OCI-LY7 (cell line): ENCODE measurements at regions of chr7 and their contacts with region 1.

Region 1: DNA sequence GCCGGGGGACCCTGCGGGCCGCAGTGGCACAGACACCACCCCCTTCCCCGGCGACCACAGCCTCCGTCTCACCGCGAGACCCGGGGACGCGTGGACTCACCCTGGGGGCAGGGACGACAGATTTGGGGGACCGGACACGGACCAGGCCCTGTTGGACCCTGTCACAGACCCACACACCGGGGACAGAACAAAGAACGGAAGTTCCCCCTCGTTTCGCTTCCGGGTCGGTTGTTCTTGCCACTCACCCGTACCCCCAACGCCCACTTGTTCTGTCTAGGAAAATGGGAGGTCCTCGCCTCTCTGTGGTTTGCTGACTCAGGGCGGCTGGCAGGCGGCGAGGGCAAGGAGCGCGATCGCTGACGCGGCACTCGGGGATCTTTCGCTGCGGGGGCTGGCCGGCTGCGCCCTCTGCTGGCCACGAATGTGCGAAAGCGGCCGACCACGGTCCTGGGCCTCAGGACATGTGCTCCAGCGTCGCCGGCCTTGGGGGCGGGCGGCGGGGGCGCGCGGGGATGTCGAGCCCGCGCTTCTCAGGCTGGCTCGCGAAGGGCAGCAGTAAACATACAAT is at the start of gene ZNF3:
- DNase-seq: peak; percentile 97
- H3K4me3 ChIP-seq: peak within 1 kb of the TSS; percentile 73
- H3K27ac ChIP-seq: peak within 1 kb of the TSS; percentile 64
- H3K4me1 ChIP-seq: peaks cover 22% of the 10 kb centered on the region
- CTCF ChIP-seq: peak; percentile 96
- total RNA-seq, gene ZNF3: 19.8 and 21.8 TPM in 2 replicates

Region 2: GRCh38 chr7:99685129-99685876 is 396.3 kb before region 1 on chr7:
- CTCF ChIA-PET with region 1: no interaction called
- POLR2A ChIA-PET with region 1: no interaction called
- intact Hi-C with region 1: no loop called
- DNase-seq: no peak
- H3K4me3 ChIP-seq: no peak overlapping the region
- H3K27ac ChIP-seq: no peak overlapping the region
- H3K4me1 ChIP-seq: no peaks in the 10 kb centered on the region
- CTCF ChIP-seq: no peak

Region 3: DNA sequence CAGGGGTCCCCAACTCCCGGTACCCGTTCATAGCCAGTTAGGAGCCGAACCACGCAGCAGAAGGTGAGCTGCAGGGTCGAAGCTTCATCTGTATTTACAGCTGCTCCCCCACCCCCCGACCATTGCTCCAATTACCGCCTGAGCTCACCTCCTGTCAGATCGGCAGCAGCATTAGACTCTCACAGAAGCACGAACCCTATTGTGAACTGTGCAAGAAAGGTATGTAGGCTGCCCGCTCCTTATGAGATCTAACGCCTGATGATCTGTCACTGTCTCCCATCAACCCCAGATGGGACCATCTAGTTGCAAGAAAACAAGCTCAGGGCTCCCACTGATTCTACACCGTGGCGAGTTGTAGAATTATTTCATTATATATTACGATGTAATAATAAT is 91.2 kb before region 1 on chr7:
- CTCF ChIA-PET with region 1: no interaction called
- POLR2A ChIA-PET with region 1: no interaction called
- intact Hi-C with region 1: loop called (anchors 2 kb)
- DNase-seq: no peak
- H3K4me3 ChIP-seq: no peak overlapping the region
- H3K27ac ChIP-seq: no peak overlapping the region
- H3K4me1 ChIP-seq: no peaks in the 10 kb centered on the region
- CTCF ChIP-seq: no peak

Region 4: GRCh38 chr7:100126931-100127865 is 45.6 kb after region 1 on chr7 and contains the start of gene MBLAC1:
- CTCF ChIA-PET with region 1: interaction called, 3 read pairs
- POLR2A ChIA-PET with region 1: interaction called, 5 read pairs
- intact Hi-C with region 1: loop called (anchors 5 kb)
- DNase-seq: peak; percentile 95
- H3K4me3 ChIP-seq: peak within 1 kb of the TSS; percentile 73
- H3K27ac ChIP-seq: peak within 1 kb of the TSS; percentile 94
- H3K4me1 ChIP-seq: peaks cover 48% of the 10 kb centered on the region
- CTCF ChIP-seq: no peak
- total RNA-seq, gene MBLAC1: 4.4 and 4.8 TPM in 2 replicates

Region 5: GRCh38 chr7:100171087-100171681 is 89.6 kb after region 1 on chr7:
- CTCF ChIA-PET with region 1: no interaction called
- POLR2A ChIA-PET with region 1: no interaction called
- intact Hi-C with region 1: no loop called
- DNase-seq: peak; percentile 38
- H3K4me3 ChIP-seq: peak overlapping the region; percentile 57
- H3K27ac ChIP-seq: no peak overlapping the region
- H3K4me1 ChIP-seq: peaks cover 78% of the 10 kb centered on the region
- CTCF ChIP-seq: no peak